Astrocyte of the cerebellum (primary cell): ENCODE measurements at regions of chr11 and their contacts with region 1.

Region 1: DNA sequence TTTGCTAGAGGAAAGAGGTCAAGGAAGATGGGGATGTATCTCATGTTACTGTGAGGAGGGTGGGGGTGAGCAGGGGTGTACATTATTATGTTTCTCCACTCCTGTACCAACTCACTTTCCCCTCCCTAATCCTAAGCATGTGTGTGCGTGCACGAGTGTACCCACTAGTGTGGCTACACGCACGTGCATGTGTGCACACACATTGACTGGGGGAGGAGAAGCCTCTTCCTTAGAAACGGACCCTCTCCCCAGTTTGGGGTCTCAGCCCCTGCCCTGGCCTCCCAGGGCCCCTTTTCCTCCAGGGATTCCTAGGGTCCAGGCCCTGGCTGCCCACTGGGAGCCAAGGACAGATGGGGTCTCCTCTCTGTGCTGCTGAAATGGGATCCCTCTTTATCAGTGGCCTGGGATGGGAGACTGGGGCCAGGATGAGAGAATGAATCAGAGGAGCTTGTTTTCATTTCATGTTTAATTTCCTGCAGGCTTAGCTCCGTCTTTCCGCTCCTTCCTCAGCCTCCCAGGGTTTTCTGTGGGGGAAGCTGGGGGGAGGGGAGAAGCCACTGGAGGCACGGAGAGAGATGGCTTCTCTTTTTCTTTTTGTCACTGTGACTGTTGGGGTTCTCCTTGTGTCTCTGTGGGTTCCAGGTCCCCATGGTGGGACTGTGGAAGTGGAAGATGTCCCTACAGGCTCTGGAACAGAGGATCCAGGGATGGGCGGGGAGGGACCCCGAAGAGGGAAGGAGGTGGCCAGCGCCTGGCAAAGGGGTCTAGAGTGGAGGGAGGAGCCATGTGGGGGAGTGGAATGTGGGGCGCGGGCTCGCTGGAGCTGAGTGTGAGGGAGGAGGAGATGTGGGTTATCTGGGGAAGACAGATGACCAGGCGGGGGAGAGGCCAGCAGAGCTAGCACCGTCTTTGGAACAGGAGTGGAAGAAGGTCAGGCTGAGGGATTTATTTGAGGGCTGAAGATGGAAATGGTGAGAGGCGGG is 40.3 kb downstream of the ALX4 start:
- DNase-seq: no peak
- H3K4me3 ChIP-seq: no peak overlapping the region
- CTCF ChIP-seq: no peak

Region 2: GRCh38 chr11:44190868-44191200 is 78.8 kb before region 1 on chr11:
- in situ Hi-C with region 1: loop called (anchors 5 kb)
- DNase-seq: no peak
- H3K4me3 ChIP-seq: no peak overlapping the region
- CTCF ChIP-seq: no peak